HEK293T (cell line): ENCODE measurements at regions of chr10 and their contacts with region 1.

Region 1: GRCh38 chr10:119199231-119199992 is 8.0 kb upstream of the GRK5 start:
- DNase-seq: peak; percentile 84

Region 2: DNA sequence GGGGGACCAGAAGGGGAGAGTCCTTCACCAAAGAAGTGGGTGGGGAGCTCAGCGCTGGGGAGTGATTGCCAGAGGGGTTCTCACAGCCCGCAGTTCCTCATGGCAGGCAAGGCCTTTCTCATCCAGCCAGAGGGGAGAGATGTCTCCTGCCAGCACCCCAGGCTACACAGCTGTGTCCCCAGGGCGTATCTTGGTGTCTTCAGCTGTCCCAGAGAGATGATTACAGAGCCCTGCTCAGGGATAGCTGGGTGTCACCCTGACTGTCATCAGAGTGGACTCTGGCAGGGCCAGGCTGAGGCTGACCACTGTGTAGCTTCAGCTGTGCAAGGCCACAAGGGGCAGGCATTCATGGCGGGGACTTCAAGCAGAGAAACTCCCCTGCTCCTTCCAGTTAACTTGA is 218.9 kb after region 1 on chr10:
- CTCF ChIA-PET with region 1: interaction called, 12 read pairs
- POLR2A ChIA-PET with region 1: no interaction called
- DNase-seq: no peak

Region 3: GRCh38 chr10:119445311-119445934 is 246.0 kb after region 1 on chr10:
- CTCF ChIA-PET with region 1: interaction called, 17 read pairs
- POLR2A ChIA-PET with region 1: interaction called, 3 read pairs
- DNase-seq: peak; percentile 93